ENCODE measurements at regions of chr3 and their contacts with region 1.

Region 1: GRCh38 chr3:69084326-69085167 is at the start of gene ARL6IP5:
- DNase-seq: peak; percentile 97 to 99 (median 99)
- H3K4me3 ChIP-seq: peak within 1 kb of the TSS; percentile 84 to 99 (median 94)
- H3K27ac ChIP-seq: peak within 1 kb of the TSS; percentile 62 to 88
- H3K4me1 ChIP-seq: peaks cover 58 to 83% (median 73%) of the 10 kb centered on the region in 4 experiments
- H3K27me3 ChIP-seq: no peaks in the 10 kb centered on the region

Region 2: GRCh38 chr3:68832680-68833079 is 251.9 kb before region 1 on chr3:
- CTCF ChIA-PET with region 1: no interaction called
- POLR2A ChIA-PET with region 1: no interaction called
- DNase-seq: no peak
- H3K4me3 ChIP-seq: no peak overlapping the region
- H3K27ac ChIP-seq: no peak overlapping the region
- H3K4me1 ChIP-seq: no peaks in the 10 kb centered on the region
- H3K27me3 ChIP-seq: no peaks in the 10 kb centered on the region

Region 3: DNA sequence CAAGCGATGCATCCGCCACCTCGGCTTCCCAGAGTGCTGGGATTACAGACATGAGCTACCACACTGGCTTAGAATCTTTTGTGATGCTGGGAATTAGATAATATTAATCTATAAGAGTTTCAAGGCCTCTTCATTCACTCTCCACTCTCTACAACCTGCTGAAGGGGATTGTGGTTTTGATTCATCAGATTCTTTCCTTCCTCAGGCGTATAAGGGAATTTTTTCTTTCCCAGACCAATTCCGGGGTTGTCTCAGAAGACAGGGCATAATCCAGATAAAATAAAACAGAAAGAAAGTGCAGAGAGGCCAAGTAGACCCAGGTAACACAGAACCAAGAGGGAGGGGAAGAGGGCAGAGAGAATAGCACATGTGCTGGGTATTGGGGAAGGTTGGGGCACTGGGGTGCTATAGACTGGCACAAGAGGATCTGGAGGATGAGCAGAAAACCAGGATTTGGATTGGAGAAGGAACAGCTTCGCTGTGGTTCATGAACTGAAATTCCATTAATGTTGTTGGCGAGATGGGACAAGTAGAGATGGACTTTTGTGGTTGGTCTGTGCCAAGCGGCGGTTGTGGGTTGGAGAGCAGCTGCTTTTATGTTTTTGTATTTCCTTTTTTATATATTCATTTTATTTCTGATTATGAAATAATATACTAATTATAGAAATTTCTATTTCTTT is 13.0 kb after region 1 on chr3:
- CTCF ChIA-PET with region 1: interaction called, 28 read pairs
- POLR2A ChIA-PET with region 1: interaction called, 36 read pairs
- DNase-seq: no peak
- H3K4me3 ChIP-seq: peak overlapping the region in 3 of 7 experiments; percentile 26 to 38 (median 37)
- H3K27ac ChIP-seq: peak overlapping the region in 1 of 2 experiments; percentile 49
- H3K4me1 ChIP-seq: peaks cover 37 to 64% (median 52%) of the 10 kb centered on the region in 4 experiments
- H3K27me3 ChIP-seq: no peaks in the 10 kb centered on the region

Region 4: DNA sequence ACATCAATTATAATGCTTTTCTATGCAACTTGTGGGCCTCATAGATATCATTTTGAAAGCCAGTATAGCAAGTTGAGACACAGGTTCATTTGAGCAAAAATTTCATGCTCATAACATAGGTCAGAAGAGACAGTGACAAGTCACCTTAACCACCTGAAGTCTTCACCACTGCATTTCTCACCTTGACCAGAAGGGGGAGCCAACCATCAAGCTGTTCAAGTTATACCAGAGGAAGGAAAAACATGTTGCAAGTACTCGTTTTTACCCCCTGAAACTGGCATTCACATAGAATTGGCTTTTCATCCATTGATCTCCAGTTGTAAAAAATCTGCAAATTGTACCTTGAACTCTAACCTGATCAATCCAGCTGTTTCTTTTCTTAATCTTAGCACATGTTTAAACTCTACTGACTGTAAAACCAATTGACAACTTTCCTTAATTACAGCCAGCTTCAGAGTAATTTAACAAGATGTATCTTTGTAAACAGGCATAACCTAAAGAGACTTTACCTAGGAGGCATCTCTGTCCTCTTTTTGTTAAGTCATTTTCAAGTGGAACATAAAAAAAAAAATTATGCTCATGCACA is 36.4 kb after region 1 on chr3:
- CTCF ChIA-PET with region 1: interaction called, 16 read pairs
- POLR2A ChIA-PET with region 1: no interaction called
- DNase-seq: peak; percentile 83 to 91 (median 87)
- H3K4me3 ChIP-seq: no peak overlapping the region
- H3K27ac ChIP-seq: no peak overlapping the region
- H3K4me1 ChIP-seq: no peaks in the 10 kb centered on the region
- H3K27me3 ChIP-seq: no peaks in the 10 kb centered on the region

Measured in common myeloid progenitor, CD34-positive (primary cell).